GM10248 (cell line): ENCODE measurements at regions of chr9 and their contacts with region 1.

Region 1: GRCh38 chr9:35116898-35117551 is 1.4 kb upstream of the ATOSB start:
- DNase-seq: peak; percentile 84
- CTCF ChIP-seq: peak; percentile 92

Region 2: DNA sequence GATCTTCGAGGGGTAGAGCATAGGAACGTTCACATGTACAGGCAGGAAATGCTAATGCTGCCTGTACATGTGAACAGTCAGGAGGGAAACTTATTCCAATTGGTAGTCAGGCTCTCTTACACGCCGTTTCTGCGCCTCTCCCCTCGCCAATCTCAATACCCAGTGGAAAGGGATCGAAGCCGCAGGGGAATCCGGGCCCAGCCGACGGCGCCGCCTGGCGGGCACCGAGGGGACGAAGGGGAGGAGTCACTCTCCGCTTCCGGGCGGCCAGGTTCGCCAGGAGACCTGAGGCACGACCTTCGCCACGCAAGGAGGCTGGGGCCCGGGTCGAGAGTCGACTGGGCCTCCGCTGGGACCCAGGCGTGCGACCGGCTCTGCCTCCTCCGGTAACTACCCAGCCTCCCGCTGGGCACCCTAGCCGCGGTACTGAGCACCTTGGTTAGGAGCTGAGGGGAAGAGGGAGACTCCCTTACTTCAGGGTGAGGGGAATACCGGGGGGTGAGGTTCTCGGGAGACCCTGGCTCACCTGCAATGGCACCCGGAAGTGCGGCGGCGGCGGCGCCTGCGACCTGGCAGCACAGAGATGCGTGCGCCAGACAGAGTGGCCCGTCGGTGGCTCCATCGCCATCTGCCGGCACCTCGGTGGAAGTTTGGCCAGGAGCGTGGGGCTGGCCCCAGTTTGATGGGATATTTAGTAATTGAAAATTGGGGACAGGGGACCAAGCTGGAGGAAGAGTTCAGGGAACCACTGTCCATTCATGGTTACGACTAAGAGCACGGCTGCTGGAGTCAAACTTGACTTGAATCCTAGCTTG is 20.8 kb before region 1 on chr9 and contains the start of gene PIGO:
- CTCF ChIA-PET with region 1: interaction called, 28 read pairs
- POLR2A ChIA-PET with region 1: no interaction called
- DNase-seq: peak; percentile 89
- CTCF ChIP-seq: peak; percentile 96

Region 3: GRCh38 chr9:35102926-35103659 is 13.9 kb before region 1 on chr9 and contains the start of gene STOML2:
- CTCF ChIA-PET with region 1: interaction called, 28 read pairs
- POLR2A ChIA-PET with region 1: interaction called, 4 read pairs
- DNase-seq: peak; percentile 95
- CTCF ChIP-seq: no peak

Region 4: GRCh38 chr9:35258676-35259474 is 141.8 kb after region 1 on chr9:
- CTCF ChIA-PET with region 1: interaction called, 22 read pairs
- POLR2A ChIA-PET with region 1: no interaction called
- DNase-seq: peak; percentile 24
- CTCF ChIP-seq: peak; percentile 54

Region 5: GRCh38 chr9:35476596-35476995 is 359.6 kb after region 1 on chr9:
- CTCF ChIA-PET with region 1: interaction called, 42 read pairs
- POLR2A ChIA-PET with region 1: no interaction called
- DNase-seq: no peak
- CTCF ChIP-seq: no peak

Region 6: DNA sequence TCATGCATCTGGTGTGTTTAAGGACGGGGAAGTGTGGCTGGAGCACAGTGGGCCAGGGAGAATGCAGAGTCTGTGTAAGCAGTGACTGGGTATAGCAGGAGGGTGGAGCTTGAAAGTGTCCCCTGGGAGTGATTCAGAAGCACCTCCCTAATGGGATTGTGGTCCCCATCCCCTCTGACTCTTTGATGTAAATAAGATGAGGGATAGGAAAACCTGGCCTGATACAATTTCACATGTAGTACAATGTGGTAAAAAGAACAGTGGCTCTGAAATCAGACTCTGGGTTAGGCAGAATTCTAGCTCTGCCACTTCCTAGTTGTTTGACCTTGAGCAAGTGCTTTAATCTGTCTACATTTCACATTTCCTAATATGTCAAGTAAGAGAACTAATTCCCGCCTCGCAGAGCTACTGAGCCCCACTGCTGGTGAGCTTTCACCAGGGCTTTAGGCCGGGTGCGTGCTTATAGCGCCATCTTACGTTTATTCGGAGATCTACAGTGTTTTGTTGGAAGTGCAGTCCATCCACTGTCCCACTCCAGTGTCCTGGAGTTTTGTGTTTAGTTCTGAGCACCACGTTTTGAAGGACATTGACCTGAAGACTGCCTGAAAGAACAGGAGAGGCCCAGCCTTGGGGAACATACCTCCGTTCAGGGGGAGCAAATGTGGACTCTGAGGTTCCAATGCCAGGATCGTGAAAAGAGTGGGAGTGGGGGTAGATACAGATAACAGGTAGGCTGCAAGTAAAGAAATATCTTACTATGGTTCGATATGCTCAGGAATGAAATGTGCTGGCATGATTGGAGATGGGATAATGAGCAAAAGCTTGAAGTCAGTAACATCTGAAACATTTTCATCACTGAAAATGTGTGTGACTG is 436.9 kb after region 1 on chr9:
- CTCF ChIA-PET with region 1: interaction called, 11 read pairs
- POLR2A ChIA-PET with region 1: no interaction called
- DNase-seq: peak; percentile 65
- CTCF ChIP-seq: peak; percentile 64